Testis (tissue), 5 donors: ENCODE measurements at regions of chr20 and their contacts with region 1.

Region 1: GRCh38 chr20:44475694-44476560 is at the start of gene TTPAL:
- DNase-seq: peak; percentile 92
- H3K4me3 ChIP-seq: peak within 1 kb of the TSS; percentile 76 to 92
- H3K27ac ChIP-seq: peak within 1 kb of the TSS; percentile 93 to 95
- H3K4me1 ChIP-seq: peaks cover 7% of the 10 kb centered on the region
- H3K27me3 ChIP-seq: no peaks in the 10 kb centered on the region
- CTCF ChIP-seq: peak in 2 of 3 experiments; percentile 48 to 60
- POLR2A ChIP-seq: peak; percentile 99
- total RNA-seq, gene TTPAL: 12.0 to 13.1 TPM

Region 2: DNA sequence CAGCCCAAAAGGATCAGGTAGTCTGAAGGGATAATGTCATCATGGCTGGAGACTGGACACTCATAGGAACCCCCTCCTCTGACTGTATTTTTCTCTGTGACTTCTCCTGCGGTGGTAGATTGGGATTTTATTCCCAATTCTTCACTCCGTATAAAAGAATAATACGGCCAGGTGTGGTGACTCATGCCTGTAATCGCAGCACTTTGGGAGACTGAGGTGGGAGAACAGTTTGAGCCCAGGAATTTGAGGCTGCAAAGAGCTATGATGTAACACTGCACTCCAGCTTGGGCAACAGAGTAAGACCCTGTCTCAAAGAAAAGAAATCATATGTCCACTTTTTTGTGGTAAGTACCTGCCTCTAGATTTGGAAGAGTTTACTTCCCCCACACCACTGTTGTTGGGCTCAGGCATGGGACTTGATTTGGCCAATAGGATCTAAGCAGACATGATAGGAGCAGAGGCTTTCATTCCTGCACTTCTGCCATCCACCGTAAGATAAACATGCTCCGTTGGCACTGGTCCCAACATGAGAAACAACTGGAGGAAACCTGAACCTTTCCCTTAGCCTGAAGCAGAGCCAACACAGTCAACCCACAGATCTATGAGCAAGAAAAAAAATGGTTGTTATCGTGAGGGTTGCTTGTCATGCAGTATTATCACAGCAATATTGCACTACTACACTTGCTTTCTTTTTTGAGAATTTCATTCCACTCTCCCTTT is 371.0 kb before region 1 on chr20:
- intact Hi-C with region 1: no loop called
- DNase-seq: no peak
- H3K4me3 ChIP-seq: no peak overlapping the region
- H3K27ac ChIP-seq: no peak overlapping the region
- H3K4me1 ChIP-seq: no peaks in the 10 kb centered on the region
- H3K27me3 ChIP-seq: no peaks in the 10 kb centered on the region
- CTCF ChIP-seq: no peak
- POLR2A ChIP-seq: no peak

Region 3: DNA sequence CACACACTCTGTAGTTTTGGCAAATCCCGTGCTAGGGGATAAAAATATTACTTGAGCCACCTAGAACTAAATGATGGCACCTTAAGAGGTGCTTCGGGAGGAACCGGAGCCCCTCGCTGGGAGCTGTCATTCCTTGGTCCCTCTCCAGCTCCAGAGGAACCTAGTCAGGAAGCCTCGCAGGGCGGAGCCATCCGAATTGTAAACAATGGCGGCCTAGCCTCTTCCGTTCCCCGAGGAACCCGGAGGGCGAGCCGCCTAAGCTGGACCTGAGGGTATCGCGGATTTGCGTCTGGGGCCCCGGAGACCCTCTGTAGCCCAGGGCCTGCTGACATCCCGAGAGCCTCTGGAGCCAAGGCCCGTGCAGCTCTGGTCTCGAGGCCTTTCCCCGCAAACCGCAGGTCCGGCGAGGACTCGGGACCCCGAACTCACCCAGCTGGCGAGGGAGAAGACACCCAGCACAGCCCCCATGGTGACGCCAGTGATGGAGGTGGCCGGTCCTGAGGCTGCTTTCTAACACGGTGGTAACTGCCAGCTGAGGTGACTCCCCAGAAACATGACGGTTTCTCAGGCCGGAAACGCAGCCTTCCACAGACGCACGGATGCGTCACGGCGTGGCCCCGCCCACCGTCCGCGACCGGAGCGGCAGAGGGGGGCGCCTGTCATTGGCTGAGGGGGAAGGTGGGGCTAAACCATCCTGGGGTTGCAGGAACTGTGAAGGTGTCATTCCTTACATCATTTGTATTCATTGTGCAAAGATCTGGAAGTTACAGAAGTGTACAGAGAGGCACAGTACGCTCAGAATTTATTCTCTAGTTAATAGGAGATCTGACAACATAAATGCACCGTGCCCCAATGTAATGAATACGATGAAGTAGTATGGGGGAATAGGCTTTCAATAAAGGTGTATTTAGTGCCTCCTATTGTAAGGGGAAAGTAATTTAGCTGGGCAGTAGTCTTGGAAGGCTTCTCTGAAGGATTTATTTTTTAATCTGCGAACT is 45.9 kb after region 1 on chr20 and contains the start of gene SERINC3:
- intact Hi-C with region 1: loop called (anchors 10 kb)
- DNase-seq: peak; percentile 98
- H3K4me3 ChIP-seq: peak within 1 kb of the TSS; percentile 90 to 100
- H3K27ac ChIP-seq: peak within 1 kb of the TSS; percentile 98 to 100
- H3K4me1 ChIP-seq: peaks cover 21% of the 10 kb centered on the region
- H3K27me3 ChIP-seq: no peaks in the 10 kb centered on the region
- CTCF ChIP-seq: peak in 1 of 3 experiments; percentile 1
- POLR2A ChIP-seq: peak; percentile 93
- total RNA-seq, gene SERINC3: 163 to 181 TPM

Region 4: GRCh38 chr20:44609511-44610312 is 133.8 kb after region 1 on chr20:
- intact Hi-C with region 1: loop called (anchors 10 kb)
- DNase-seq: peak; percentile 94
- H3K4me3 ChIP-seq: no peak overlapping the region
- H3K27ac ChIP-seq: peak overlapping the region; percentile 75 to 83
- H3K4me1 ChIP-seq: peaks cover 11% of the 10 kb centered on the region
- H3K27me3 ChIP-seq: no peaks in the 10 kb centered on the region
- CTCF ChIP-seq: peak; percentile 95 to 96 (median 95)
- POLR2A ChIP-seq: no peak